Activated CD4-positive, alpha-beta T cell treated with anti-CD3 and anti-CD28 coated beads, Interleukin-2, amount 10 ng/mL, durations not matched to agents 24 days and 14 days (primary cell): ENCODE measurements at regions of chr9 and their contacts with region 1.

Region 1: GRCh38 chr9:79583952-79584654 is 12.3 kb downstream of the TLE4 start:
- DNase-seq: peak; percentile 70
- H3K4me3 Mint-ChIP-seq: peak overlapping the region; percentile 13
- H3K27ac Mint-ChIP-seq: no peak overlapping the region
- H3K4me1 Mint-ChIP-seq: peaks cover 37% of the 10 kb centered on the region
- H3K27me3 Mint-ChIP-seq: no peaks in the 10 kb centered on the region

Region 2: DNA sequence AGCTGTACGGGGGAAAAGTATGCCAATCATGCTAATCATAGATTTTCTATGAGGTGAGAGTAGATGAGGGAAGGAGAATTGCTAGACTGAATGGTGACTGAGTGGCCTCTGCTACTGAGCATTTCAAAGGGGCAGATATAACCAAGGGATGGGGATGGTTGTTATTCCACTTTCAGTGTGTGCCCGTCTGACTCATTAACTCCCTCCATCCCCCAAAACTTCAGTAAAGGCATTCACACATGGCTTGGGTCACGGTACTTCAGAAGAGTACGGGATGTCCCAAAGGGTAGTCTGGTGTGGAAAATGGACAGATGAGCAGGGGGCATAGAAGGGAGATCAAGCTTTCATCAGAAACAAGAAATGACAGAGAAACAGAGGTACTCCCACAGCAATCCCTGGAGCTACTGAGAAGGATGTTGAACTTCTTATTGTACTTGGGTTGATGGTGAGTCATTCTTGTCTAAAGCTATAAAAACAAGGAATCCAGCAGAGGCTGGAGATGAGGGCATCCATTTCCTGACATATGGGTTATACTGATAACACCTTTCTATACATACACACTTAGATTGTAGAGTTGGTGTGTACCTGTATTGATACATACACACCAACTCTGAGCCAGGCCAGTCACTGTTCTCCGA is 21.2 kb before region 1 on chr9:
- intact Hi-C with region 1: loop called (anchors 2 kb)
- DNase-seq: no peak
- H3K4me3 Mint-ChIP-seq: no peak overlapping the region
- H3K27ac Mint-ChIP-seq: no peak overlapping the region
- H3K4me1 Mint-ChIP-seq: peaks cover 6% of the 10 kb centered on the region
- H3K27me3 Mint-ChIP-seq: peaks cover 15% of the 10 kb centered on the region